ENCODE measurements at regions of chr2 and their contacts with region 1.

Region 1: DNA sequence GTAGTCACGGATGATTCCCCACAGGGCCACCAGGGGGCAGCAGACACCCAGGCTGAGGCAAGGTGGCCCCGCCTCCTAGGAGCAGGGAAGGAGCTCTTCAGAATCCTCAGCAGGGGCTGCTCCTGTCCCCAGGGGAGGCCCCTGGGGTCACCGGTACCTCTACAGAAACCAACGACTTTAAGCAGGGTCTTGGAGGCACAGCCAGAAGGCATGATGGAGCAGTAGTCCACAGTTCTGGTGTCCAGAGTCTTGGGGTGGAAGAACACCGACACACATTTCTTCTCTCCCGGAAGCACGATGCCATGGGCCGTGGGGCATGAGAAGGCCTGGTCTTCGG is 11.5 kb downstream of the CFAP65 start:
- DNase-seq: peak; percentile 84 to 91
- H3K4me3 ChIP-seq: no peak overlapping the region
- H3K4me3 Mint-ChIP-seq: no peak overlapping the region
- H3K27ac Mint-ChIP-seq: no peak overlapping the region
- H3K4me1 ChIP-seq: no peaks in the 10 kb centered on the region
- H3K4me1 Mint-ChIP-seq: peaks cover 11% of the 10 kb centered on the region
- H3K27me3 ChIP-seq: no peaks in the 10 kb centered on the region
- H3K27me3 Mint-ChIP-seq: peaks cover 11% of the 10 kb centered on the region
- CTCF ChIP-seq: peak; percentile 96

Region 2: GRCh38 chr2:218927422-218927821 is 102.4 kb before region 1 on chr2:
- CTCF ChIA-PET with region 1: no interaction called
- POLR2A ChIA-PET with region 1: no interaction called
- intact Hi-C with region 1: no loop called
- DNase-seq: no peak
- H3K4me3 ChIP-seq: no peak overlapping the region
- H3K4me3 Mint-ChIP-seq: no peak overlapping the region
- H3K27ac Mint-ChIP-seq: no peak overlapping the region
- H3K4me1 ChIP-seq: no peaks in the 10 kb centered on the region
- H3K4me1 Mint-ChIP-seq: no peaks in the 10 kb centered on the region
- H3K27me3 ChIP-seq: no peaks in the 10 kb centered on the region
- H3K27me3 Mint-ChIP-seq: no peaks in the 10 kb centered on the region
- CTCF ChIP-seq: no peak

Region 3: GRCh38 chr2:218944759-218945404 is 84.9 kb before region 1 on chr2:
- CTCF ChIA-PET with region 1: no interaction called
- POLR2A ChIA-PET with region 1: no interaction called
- intact Hi-C with region 1: no loop called
- DNase-seq: no peak
- H3K4me3 ChIP-seq: no peak overlapping the region
- H3K4me3 Mint-ChIP-seq: no peak overlapping the region
- H3K27ac Mint-ChIP-seq: no peak overlapping the region
- H3K4me1 ChIP-seq: no peaks in the 10 kb centered on the region
- H3K4me1 Mint-ChIP-seq: no peaks in the 10 kb centered on the region
- H3K27me3 ChIP-seq: no peaks in the 10 kb centered on the region
- H3K27me3 Mint-ChIP-seq: peaks cover 13% of the 10 kb centered on the region
- CTCF ChIP-seq: no peak

Region 4: DNA sequence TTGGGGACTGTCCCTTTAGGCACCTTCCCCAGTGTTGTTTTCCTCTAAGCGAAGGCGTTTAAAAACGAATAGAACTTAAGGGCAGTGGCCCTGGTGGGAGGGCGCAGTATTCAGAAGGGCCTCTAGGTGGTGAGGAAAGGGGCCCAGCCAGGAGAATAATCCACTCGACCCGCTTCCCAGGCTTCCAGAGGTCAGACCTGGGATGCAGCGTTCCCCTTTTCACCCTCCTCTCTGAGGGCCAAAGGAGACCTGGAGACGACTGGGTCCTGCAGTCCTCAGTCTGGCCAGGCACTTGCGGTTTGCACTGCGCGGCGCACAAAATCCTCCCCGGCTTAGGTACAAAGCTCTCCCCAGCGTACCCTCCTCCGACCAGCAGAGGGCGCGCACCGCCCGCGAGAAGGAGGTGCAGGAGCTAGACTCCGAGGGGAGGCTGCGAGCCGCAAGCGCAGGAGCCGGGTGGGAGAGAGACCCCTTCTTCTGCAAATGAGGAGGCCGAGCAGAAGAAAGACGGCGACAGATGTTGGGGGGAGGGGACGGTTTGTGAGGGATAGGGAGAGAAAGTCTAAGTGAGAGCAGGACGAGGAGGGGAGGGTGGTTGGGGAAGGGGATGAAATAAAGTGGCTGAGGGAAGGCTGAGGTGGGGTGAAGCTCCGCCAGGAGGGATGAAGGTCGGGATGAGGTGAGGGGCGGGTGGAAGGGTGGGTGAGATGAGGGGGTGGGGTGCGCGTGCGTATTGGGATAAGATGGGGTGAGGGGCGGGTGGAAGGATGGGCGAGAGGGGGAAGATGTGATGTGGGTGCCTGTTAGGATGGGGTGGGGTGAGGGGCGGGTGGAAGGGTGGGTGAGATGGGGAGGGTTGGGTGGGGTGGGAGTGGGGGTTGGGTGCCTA is 49.7 kb before region 1 on chr2:
- CTCF ChIA-PET with region 1: interaction called, 11 read pairs
- POLR2A ChIA-PET with region 1: no interaction called
- intact Hi-C with region 1: loop called (anchors 5 kb)
- DNase-seq: peak; percentile 87 to 90
- H3K4me3 ChIP-seq: peak overlapping the region; percentile 28
- H3K4me3 Mint-ChIP-seq: peak overlapping the region; percentile 31
- H3K27ac Mint-ChIP-seq: no peak overlapping the region
- H3K4me1 ChIP-seq: peaks cover 14% of the 10 kb centered on the region
- H3K4me1 Mint-ChIP-seq: peaks cover 6% of the 10 kb centered on the region
- H3K27me3 ChIP-seq: peaks cover 9% of the 10 kb centered on the region
- H3K27me3 Mint-ChIP-seq: peaks cover 23% of the 10 kb centered on the region
- CTCF ChIP-seq: peak; percentile 92 to 97

Region 5: DNA sequence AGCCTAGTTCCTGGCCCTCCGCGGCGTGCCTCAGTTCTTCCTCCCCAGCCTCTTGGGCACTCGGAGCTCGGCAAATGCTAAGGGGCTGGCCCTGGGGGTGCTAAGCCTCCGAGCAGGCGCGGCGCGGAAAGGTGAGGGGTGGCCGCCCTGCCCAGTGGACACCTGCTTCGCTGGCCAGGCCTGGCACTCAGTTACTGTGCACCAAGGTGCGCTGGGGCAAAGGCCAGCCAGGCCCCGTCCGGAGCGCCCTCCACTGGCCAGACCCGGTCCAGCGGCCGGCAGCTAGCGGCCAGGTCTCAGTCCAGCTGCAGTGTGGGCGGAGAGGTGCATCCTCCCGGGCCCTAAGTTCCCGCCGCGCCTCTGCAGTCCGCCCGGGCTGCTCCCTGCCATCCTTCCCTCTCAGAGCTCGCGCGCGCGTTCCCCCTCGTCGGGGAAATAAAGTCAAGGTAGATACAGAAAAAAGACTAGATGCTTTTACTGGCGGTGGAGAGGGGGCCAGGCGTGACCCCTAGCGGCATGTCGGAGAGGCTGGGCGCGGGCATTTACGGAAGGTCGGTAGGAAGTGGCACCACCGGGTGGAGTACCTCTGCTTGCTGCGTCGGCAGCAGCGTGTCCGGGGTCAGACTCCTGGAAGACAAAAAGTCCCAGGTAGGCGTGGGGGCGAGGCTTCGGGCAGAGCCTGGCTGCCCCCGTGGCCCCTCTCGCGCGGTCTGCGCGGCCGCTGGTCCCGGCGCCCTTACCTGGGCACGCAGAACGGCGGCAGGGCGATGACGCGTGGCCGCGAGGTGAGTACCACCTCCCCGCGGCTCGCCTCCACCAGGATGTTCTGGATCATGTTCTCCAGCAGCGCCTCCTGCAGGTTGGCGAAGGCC is 27.2 kb before region 1 on chr2:
- CTCF ChIA-PET with region 1: interaction called, 25 read pairs
- POLR2A ChIA-PET with region 1: no interaction called
- intact Hi-C with region 1: no loop called
- DNase-seq: peak in 1 of 2 experiments; percentile 85
- H3K4me3 ChIP-seq: peak overlapping the region; percentile 67
- H3K4me3 Mint-ChIP-seq: peak overlapping the region; percentile 79
- H3K27ac Mint-ChIP-seq: no peak overlapping the region
- H3K4me1 ChIP-seq: peaks cover 25% of the 10 kb centered on the region
- H3K4me1 Mint-ChIP-seq: peaks cover 15% of the 10 kb centered on the region
- H3K27me3 ChIP-seq: no peaks in the 10 kb centered on the region
- H3K27me3 Mint-ChIP-seq: peaks cover 7% of the 10 kb centered on the region
- CTCF ChIP-seq: peak; percentile 48 to 77

Region 6: GRCh38 chr2:219016721-219017120 is 13.1 kb before region 1 on chr2:
- CTCF ChIA-PET with region 1: interaction called, 11 read pairs
- POLR2A ChIA-PET with region 1: no interaction called
- intact Hi-C with region 1: no loop called
- DNase-seq: no peak
- H3K4me3 ChIP-seq: no peak overlapping the region
- H3K4me3 Mint-ChIP-seq: no peak overlapping the region
- H3K27ac Mint-ChIP-seq: no peak overlapping the region
- H3K4me1 ChIP-seq: no peaks in the 10 kb centered on the region
- H3K4me1 Mint-ChIP-seq: no peaks in the 10 kb centered on the region
- H3K27me3 ChIP-seq: no peaks in the 10 kb centered on the region
- H3K27me3 Mint-ChIP-seq: peaks cover 5% of the 10 kb centered on the region
- CTCF ChIP-seq: no peak

Region 7: DNA sequence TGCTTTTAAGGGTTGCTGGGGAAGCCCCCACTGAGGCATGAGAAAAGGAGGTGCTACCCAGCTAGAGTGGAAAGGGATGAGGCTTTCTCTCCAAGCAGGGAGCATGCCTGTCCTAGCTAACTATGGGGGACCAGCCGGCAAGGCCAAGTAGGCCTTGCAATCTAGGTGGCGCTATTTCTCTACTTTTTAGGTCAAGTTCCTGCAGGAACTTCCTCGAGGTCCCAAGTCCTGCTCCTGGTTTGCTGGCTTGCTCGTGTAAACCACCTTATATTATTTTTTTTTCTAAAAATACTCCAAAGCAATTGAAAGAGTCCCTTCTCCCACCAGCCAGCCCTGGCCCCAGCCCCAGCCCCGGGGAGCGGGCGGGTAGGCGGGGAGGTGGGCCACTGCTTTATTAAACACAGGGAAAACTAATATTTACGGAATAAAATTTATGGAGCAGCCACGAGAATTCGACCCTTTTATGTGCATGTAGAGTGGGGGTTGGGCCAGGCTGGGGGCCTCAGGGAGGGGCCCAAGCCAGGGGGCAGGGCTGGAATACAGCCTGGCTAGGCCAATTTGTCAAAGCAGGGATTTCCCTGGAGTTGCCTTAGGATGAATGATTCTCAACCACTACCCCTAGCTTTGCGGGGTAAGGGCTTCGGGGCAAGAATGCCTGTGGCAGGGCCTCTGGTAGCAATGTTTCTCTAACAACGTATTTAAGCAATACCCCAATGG is 43.8 kb after region 1 on chr2:
- CTCF ChIA-PET with region 1: interaction called, 29 read pairs
- POLR2A ChIA-PET with region 1: no interaction called
- intact Hi-C with region 1: no loop called
- DNase-seq: peak; percentile 77 to 78
- H3K4me3 ChIP-seq: no peak overlapping the region
- H3K4me3 Mint-ChIP-seq: peak overlapping the region; percentile 59
- H3K27ac Mint-ChIP-seq: peak overlapping the region; percentile 72
- H3K4me1 ChIP-seq: peaks cover 48% of the 10 kb centered on the region
- H3K4me1 Mint-ChIP-seq: peaks cover 46% of the 10 kb centered on the region
- H3K27me3 ChIP-seq: no peaks in the 10 kb centered on the region
- H3K27me3 Mint-ChIP-seq: no peaks in the 10 kb centered on the region
- CTCF ChIP-seq: peak; percentile 65 to 79

Region 8: GRCh38 chr2:219119422-219120043 is 89.7 kb after region 1 on chr2:
- CTCF ChIA-PET with region 1: interaction called, 30 read pairs
- POLR2A ChIA-PET with region 1: no interaction called
- intact Hi-C with region 1: loop called (anchors 1 kb)
- DNase-seq: peak; percentile 77 to 80
- H3K4me3 ChIP-seq: no peak overlapping the region
- H3K4me3 Mint-ChIP-seq: no peak overlapping the region
- H3K27ac Mint-ChIP-seq: no peak overlapping the region
- H3K4me1 ChIP-seq: peaks cover 36% of the 10 kb centered on the region
- H3K4me1 Mint-ChIP-seq: peaks cover 44% of the 10 kb centered on the region
- H3K27me3 ChIP-seq: no peaks in the 10 kb centered on the region
- H3K27me3 Mint-ChIP-seq: no peaks in the 10 kb centered on the region
- CTCF ChIP-seq: peak; percentile 84 to 89

Region 9: GRCh38 chr2:219155054-219155644 is 125.4 kb after region 1 on chr2:
- CTCF ChIA-PET with region 1: interaction called, 60 read pairs
- POLR2A ChIA-PET with region 1: no interaction called
- intact Hi-C with region 1: loop called (anchors 1 kb)
- DNase-seq: peak; percentile 60 to 83
- H3K4me3 ChIP-seq: no peak overlapping the region
- H3K4me3 Mint-ChIP-seq: no peak overlapping the region
- H3K27ac Mint-ChIP-seq: no peak overlapping the region
- H3K4me1 ChIP-seq: 0 out of 2 replicates have a peak, but pooled peaks cover 4% of the 10 kb centered on the region
- H3K4me1 Mint-ChIP-seq: peaks cover 5% of the 10 kb centered on the region
- H3K27me3 ChIP-seq: no peaks in the 10 kb centered on the region
- H3K27me3 Mint-ChIP-seq: no peaks in the 10 kb centered on the region
- CTCF ChIP-seq: peak; percentile 59 to 85